Activated T-helper 2 cell treated with anti-CD3 and anti-CD28 coated beads, Interferon-gamma antibody, Interleukin-2, Interleukin-4, amounts not matched to agents 10 μg/mL and 5 μg/mL and 100 μg/mL, durations not matched to agents 14 hours and 24 hours and 36 hours (primary cell): ENCODE measurements at regions of chr3 and their contacts with region 1.

Region 1: DNA sequence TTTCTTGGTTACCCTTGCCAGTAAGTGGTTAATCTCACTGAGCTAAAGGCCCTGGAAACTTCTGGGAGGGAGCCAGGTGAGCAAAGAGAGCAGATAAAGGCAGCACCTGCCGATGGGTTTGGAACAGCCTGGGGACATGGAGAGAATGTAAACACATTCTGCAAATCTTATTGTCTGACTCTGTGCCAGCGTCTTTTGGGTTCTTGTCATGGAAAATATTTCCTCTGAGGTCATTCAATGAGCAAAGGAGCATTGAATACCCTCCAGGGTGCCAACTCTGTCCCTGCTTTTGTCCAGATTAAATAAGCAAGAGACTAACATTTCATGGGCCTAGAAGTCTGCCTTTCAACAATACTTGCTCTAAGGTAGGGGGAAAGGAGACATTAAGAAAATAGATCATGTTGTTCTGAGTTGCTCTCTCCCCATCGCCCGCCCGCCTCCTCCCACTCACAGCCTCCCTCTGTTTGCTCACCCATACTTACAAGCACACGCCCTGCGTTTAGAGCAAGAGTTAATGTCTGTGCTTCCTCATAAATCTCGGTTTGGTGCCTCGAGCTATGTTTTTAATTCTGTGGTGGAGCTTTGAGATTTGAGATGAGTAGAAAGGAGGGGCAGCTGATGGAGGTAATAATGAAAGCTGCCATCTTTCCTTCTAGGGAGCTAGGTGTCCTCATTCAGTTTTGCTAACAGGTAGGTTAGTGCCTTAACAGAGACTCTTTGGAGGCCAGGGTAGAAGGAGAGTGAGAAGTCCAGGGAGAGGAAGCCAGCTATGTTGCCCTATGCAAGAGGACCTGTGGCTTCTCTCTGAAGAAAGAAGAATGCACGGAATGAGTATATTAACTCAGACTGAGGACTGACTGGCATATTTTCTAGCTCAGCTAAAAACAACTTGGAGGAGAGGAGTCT is 132.9 kb downstream of the TPRG1 start:
- DNase-seq: no peak
- H3K4me3 Mint-ChIP-seq: peak overlapping the region; percentile 71
- H3K27ac Mint-ChIP-seq: peak overlapping the region; percentile 98
- H3K4me1 Mint-ChIP-seq: peaks cover 75% of the 10 kb centered on the region
- H3K27me3 Mint-ChIP-seq: no peaks in the 10 kb centered on the region

Region 2: DNA sequence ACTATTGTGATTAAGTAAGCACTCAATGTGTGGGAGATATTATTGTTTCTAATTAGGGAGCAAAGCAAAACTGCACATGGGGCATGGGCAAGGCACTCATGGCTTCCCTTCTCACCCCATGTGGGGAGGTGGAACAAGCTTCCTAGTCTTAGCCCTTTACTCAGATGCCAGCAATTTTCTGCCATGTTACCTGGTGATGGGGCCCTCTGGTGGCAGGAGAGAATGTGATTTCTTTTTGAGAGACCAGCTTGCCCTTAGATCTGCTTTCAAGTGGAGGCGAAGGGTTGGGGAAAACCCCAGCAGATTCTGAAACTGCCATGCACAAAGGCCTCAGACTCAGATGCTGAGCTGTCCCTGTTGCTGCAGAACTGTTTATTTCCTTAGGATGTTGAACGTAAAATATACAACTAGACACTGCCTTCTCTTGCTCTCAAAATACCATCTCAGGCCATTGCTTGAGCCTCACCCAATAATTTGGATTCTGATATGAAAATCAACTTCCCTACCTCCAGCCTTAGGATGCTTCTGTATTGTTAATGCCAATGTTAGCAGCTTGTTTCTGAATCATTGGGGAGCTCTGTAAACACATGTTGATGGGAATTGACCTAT is 263.1 kb before region 1 on chr3:
- intact Hi-C with region 1: loop called (anchors 5 kb)
- DNase-seq: peak; percentile 76
- H3K4me3 Mint-ChIP-seq: no peak overlapping the region
- H3K27ac Mint-ChIP-seq: peak overlapping the region; percentile 25
- H3K4me1 Mint-ChIP-seq: peaks cover 51% of the 10 kb centered on the region
- H3K27me3 Mint-ChIP-seq: no peaks in the 10 kb centered on the region

Region 3: DNA sequence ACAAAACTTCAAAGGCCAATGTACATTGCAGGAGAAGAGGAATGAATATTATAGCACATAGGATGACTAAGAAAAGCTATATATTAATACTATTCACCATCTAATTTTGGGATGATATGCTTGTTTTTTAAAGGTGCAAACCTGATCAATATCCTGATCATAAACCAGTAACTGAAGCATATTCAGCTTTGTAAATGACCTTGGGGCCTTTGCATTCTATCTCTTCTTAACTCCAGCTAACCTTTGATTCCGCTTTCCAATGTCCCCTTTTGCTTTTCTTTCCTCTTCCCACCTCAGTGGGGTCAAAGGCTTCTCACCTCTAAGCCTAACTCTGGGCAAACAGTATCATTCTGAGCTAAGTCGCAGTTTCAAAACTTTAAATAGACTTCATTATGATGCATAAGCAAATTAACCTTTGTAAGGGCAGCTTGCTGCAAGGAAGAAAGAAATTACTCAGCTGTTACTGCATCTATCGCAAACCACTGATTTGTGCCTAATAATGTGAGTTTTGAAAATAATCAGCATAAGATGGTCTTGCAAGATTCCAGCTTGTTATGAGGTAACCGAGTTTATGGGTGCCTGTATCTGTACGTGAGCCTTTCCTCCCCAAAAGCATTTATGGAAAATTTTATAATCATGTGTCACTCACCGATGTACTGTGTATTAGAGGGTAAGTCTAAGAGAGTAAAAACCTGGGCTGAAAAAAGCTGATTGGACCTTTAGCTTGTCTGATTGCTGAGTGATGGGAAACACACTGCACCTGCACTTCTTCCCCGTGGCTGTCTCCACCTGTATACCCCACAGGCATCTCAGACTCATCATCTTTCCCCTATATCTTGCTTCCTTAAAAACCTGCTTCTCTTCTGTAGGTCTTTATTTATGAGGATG is 16.1 kb before region 1 on chr3:
- intact Hi-C with region 1: loop called (anchors 1 kb)
- DNase-seq: no peak
- H3K4me3 Mint-ChIP-seq: peak overlapping the region; percentile 45
- H3K27ac Mint-ChIP-seq: peak overlapping the region; percentile 88
- H3K4me1 Mint-ChIP-seq: peaks cover 43% of the 10 kb centered on the region
- H3K27me3 Mint-ChIP-seq: no peaks in the 10 kb centered on the region

Region 4: GRCh38 chr3:189355481-189356201 is 50.9 kb after region 1 on chr3:
- intact Hi-C with region 1: loop called (anchors 2 kb)
- DNase-seq: peak; percentile 34
- H3K4me3 Mint-ChIP-seq: peak overlapping the region; percentile 24
- H3K27ac Mint-ChIP-seq: peak overlapping the region; percentile 83
- H3K4me1 Mint-ChIP-seq: peaks cover 35% of the 10 kb centered on the region
- H3K27me3 Mint-ChIP-seq: no peaks in the 10 kb centered on the region

Region 5: DNA sequence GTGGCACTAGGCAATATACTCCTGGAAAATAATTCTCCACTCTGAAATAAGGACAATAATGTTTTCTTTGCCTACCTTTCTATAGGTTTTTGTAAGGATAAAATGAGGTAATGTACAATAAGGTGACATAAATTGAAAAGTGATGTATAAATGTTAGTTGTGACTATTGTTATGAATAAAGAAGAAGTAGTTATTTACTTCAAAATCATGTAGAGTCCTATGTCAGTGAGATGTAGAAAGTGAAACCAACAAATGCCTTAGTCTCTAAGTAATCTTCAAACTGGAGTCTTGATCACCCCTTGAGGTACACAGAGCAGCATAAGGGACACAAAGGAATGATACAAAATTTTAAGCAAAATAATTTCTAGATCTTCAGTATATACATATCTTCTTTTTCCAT is 266.2 kb after region 1 on chr3:
- intact Hi-C with region 1: loop called (anchors 2 kb)
- DNase-seq: no peak
- H3K4me3 Mint-ChIP-seq: peak overlapping the region; percentile 9
- H3K27ac Mint-ChIP-seq: peak overlapping the region; percentile 20
- H3K4me1 Mint-ChIP-seq: peaks cover 70% of the 10 kb centered on the region
- H3K27me3 Mint-ChIP-seq: no peaks in the 10 kb centered on the region

Region 6: GRCh38 chr3:190585805-190586630 is 1281.3 kb after region 1 on chr3:
- intact Hi-C with region 1: loop called (anchors 10 kb)
- DNase-seq: peak; percentile 59
- H3K4me3 Mint-ChIP-seq: peak overlapping the region; percentile 73
- H3K27ac Mint-ChIP-seq: peak overlapping the region; percentile 95
- H3K4me1 Mint-ChIP-seq: peaks cover 78% of the 10 kb centered on the region
- H3K27me3 Mint-ChIP-seq: no peaks in the 10 kb centered on the region